Left colon (tissue), 2 donors: ENCODE measurements at regions of chr16 and their contacts with region 1.

Region 1: GRCh38 chr16:4506450-4506849 is 30.3 kb downstream of the HMOX2 start:
- DNase-seq: peak; percentile 56 to 57
- ATAC-seq: peak; percentile 70

Region 2: GRCh38 chr16:4548124-4548523 is 41.7 kb after region 1 on chr16:
- intact Hi-C with region 1: loop called in 1 of 2 experiments (anchors 5 kb)
- DNase-seq: no peak
- ATAC-seq: peak; percentile 24